Activated CD4-positive, alpha-beta T cell treated with anti-CD3 and anti-CD28 coated beads for 36 hours (primary cell): ENCODE measurements at regions of chr7 and their contacts with region 1.

Region 1: DNA sequence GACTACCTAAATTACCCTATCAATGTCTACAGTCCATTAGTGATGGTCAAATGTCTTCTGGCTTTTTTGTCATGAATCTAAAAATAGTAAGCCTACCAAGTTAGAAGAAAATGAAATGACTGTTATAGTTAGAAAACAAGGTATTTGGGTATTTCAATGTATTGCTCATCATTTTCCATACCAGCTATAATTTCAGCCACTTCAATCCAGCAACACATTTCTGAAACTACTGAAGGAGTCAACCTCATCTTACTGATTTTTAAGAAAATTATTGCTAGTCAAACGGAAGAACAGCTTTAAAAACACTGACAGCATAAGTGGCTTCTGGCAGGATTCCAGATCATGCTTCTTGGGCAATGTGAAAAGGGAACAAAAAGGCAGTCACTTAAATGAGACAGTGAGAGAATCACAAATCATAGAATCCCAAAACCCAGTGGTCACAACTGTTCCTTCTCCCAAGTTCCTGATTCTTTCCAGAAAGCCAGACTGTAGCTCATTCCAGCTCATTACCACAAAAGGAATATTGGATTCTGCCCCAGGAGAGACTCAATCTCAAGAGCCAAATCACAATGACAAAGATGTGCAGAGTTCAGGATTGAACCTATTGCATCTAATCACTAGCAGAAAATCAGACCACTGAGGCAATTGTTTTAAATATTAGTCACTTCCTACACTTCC is 61.2 kb upstream of the LRRN3 start:
- DNase-seq: peak; percentile 72
- ATAC-seq: peak; percentile 63
- H3K4me3 Mint-ChIP-seq: peak overlapping the region; percentile 34
- H3K27ac Mint-ChIP-seq: peak overlapping the region; percentile 99
- H3K4me1 Mint-ChIP-seq: peaks cover 61% of the 10 kb centered on the region
- H3K27me3 Mint-ChIP-seq: no peaks in the 10 kb centered on the region

Region 2: GRCh38 chr7:110960811-110961210 is 68.9 kb before region 1 on chr7:
- CTCF ChIA-PET with region 1: no interaction called
- POLR2A ChIA-PET with region 1: no interaction called
- intact Hi-C with region 1: no loop called
- DNase-seq: no peak
- ATAC-seq: no peak
- H3K4me3 Mint-ChIP-seq: no peak overlapping the region
- H3K27ac Mint-ChIP-seq: no peak overlapping the region
- H3K4me1 Mint-ChIP-seq: no peaks in the 10 kb centered on the region
- H3K27me3 Mint-ChIP-seq: no peaks in the 10 kb centered on the region

Region 3: DNA sequence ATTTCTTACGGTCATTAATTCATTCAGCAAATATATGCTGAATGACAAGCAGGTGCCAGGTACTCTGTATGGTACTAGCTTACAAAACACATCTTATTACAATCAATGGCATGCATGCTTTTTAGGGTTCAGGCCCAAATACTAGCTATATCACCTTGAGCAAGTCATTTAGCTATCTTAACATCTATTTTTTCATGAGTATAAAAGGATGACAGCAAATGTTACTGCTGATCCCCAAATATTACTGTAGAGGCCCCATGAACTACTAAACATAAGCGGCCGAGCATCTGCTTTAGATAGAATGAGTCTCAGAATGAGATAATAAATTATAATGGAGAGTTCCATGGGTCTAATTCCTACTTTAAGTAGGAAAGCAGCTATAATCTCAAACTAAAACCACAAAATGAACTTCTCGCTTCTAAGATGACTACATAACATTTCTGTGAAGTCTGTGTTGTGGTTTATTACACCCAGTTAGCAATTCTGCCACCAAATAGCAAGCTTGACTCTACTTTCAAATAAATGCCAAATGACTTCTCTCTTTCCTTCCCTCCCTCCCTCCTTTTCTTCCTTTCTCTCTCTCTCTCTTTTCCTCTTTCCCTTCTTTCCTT is 52.5 kb before region 1 on chr7:
- CTCF ChIA-PET with region 1: no interaction called
- POLR2A ChIA-PET with region 1: no interaction called
- intact Hi-C with region 1: loop called in 1 of 2 experiments (anchors 2 kb)
- DNase-seq: no peak
- ATAC-seq: peak; percentile 76
- H3K4me3 Mint-ChIP-seq: no peak overlapping the region
- H3K27ac Mint-ChIP-seq: no peak overlapping the region
- H3K4me1 Mint-ChIP-seq: peaks cover 28% of the 10 kb centered on the region
- H3K27me3 Mint-ChIP-seq: peaks cover 2% of the 10 kb centered on the region

Region 4: DNA sequence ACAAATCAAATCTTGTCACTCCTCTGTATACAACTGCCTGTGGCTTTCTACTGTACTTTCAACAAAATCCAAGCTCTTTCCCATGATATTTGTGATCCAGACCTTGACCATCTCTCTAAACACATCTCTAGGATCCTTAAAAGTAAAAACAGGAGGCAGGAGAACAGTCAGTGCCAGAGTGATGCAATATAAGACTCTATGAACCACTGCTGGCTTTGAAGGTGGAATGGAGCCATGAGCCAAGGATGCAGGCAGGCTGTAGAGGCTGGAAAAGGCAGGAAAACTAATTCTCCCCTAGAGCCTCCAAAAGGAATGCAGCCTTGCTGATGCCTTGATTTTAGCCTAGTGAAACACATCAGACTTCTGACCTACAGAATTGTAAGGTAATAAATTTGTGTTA is 15.7 kb after region 1 on chr7:
- CTCF ChIA-PET with region 1: no interaction called
- POLR2A ChIA-PET with region 1: no interaction called
- intact Hi-C with region 1: no loop called
- DNase-seq: no peak
- ATAC-seq: no peak
- H3K4me3 Mint-ChIP-seq: no peak overlapping the region
- H3K27ac Mint-ChIP-seq: no peak overlapping the region
- H3K4me1 Mint-ChIP-seq: peaks cover 13% of the 10 kb centered on the region
- H3K27me3 Mint-ChIP-seq: no peaks in the 10 kb centered on the region

Region 5: DNA sequence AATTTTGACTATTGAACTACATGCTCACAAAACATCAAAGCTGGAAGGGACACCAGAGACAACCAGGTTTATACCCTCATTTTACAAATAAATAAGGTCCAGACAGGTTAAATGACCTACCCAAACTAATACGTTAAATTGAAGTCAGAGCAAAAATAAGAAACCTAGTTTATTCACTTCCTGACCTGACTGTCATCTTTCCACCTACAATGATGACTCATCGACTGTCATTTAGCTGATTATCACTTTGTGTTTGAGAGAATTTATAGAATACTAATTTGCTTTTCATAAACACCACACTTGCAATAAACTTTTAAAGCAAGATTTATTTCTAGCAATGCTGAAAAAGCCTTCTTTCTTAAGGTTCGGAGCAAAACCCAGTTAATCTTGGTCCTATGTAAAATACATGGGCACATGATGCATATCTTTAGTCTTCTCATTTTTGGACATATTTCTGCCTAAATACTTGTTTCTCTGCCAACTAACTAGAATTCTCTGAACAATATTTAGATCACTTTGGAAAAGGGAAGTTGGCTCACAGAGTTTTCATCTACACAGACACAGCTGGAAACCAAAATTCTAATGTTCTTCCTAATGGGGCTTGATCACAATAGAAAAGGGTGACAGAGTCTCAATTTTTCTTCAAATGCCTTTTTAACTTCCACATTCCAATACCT is 44.5 kb after region 1 on chr7:
- CTCF ChIA-PET with region 1: interaction called, 9 read pairs
- POLR2A ChIA-PET with region 1: no interaction called
- intact Hi-C with region 1: loop called (anchors 1 kb)
- DNase-seq: no peak
- ATAC-seq: peak; percentile 34
- H3K4me3 Mint-ChIP-seq: peak overlapping the region; percentile 28
- H3K27ac Mint-ChIP-seq: peak overlapping the region; percentile 51
- H3K4me1 Mint-ChIP-seq: peaks cover 64% of the 10 kb centered on the region
- H3K27me3 Mint-ChIP-seq: no peaks in the 10 kb centered on the region

Region 6: DNA sequence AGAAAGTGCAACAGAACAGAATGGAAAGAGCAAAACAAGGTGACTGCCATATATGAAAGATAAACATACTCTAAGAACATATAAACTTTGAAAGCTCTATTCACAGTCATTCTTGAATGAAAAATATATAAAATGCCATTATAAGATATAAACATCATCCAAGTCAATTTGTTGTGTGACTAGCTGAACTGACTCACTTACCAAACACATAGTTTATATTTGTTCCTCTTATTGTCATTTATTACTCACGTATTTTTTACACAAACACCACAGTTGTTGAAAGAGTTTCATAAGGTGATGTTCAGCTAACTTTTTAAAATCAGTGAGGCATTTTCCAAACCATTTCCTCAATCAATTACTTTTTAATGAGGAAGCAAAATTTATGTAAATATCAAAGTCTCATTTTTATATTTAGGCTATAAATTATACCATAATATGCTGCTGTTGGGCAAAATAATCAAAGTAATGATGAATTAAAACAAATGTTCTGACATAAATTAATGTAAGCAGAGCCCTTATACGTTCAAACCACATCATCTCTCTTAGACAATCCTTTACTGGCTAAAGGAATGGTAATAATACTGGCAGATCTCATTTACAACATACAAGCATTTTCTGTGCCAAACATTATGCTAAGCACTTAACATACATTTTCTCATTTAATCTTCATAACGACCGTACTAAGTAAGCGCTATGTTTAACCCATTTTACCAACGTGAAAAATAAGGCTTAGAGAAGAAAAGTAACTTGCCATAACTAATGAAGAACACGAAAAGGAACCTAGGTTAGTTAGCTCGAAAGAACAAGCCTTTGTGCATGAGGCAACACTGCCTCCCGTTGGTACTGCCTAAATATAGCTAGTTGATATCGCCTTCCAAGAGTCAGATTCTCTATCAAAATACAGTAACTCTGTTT is 68.6 kb after region 1 on chr7:
- CTCF ChIA-PET with region 1: interaction called, 13 read pairs
- POLR2A ChIA-PET with region 1: interaction called, 9 read pairs
- intact Hi-C with region 1: no loop called
- DNase-seq: peak; percentile 79
- ATAC-seq: peak; percentile 69
- H3K4me3 Mint-ChIP-seq: peak overlapping the region; percentile 59
- H3K27ac Mint-ChIP-seq: peak overlapping the region; percentile 76
- H3K4me1 Mint-ChIP-seq: peaks cover 59% of the 10 kb centered on the region
- H3K27me3 Mint-ChIP-seq: no peaks in the 10 kb centered on the region

Region 7: GRCh38 chr7:111274857-111275256 is 245.1 kb after region 1 on chr7:
- CTCF ChIA-PET with region 1: no interaction called
- POLR2A ChIA-PET with region 1: no interaction called
- intact Hi-C with region 1: no loop called
- DNase-seq: no peak
- ATAC-seq: no peak
- H3K4me3 Mint-ChIP-seq: no peak overlapping the region
- H3K27ac Mint-ChIP-seq: no peak overlapping the region
- H3K4me1 Mint-ChIP-seq: no peaks in the 10 kb centered on the region
- H3K27me3 Mint-ChIP-seq: no peaks in the 10 kb centered on the region

Region 8: GRCh38 chr7:111561885-111562732 is 532.4 kb after region 1 on chr7 and contains the start of gene IMMP2L:
- CTCF ChIA-PET with region 1: no interaction called
- POLR2A ChIA-PET with region 1: no interaction called
- intact Hi-C with region 1: loop called in 1 of 2 experiments (anchors 5 kb)
- DNase-seq: peak; percentile 94
- ATAC-seq: peak; percentile 95
- H3K4me3 Mint-ChIP-seq: peak within 1 kb of the TSS; percentile 90
- H3K27ac Mint-ChIP-seq: peak within 1 kb of the TSS; percentile 94
- H3K4me1 Mint-ChIP-seq: peaks cover 37% of the 10 kb centered on the region
- H3K27me3 Mint-ChIP-seq: peaks cover 3% of the 10 kb centered on the region
- total RNA-seq, gene IMMP2L: 15.8 to 25.8 TPM